Gastrocnemius medialis (tissue), 4 donors: ENCODE measurements at regions of chr7 and their contacts with region 1.

Region 1: DNA sequence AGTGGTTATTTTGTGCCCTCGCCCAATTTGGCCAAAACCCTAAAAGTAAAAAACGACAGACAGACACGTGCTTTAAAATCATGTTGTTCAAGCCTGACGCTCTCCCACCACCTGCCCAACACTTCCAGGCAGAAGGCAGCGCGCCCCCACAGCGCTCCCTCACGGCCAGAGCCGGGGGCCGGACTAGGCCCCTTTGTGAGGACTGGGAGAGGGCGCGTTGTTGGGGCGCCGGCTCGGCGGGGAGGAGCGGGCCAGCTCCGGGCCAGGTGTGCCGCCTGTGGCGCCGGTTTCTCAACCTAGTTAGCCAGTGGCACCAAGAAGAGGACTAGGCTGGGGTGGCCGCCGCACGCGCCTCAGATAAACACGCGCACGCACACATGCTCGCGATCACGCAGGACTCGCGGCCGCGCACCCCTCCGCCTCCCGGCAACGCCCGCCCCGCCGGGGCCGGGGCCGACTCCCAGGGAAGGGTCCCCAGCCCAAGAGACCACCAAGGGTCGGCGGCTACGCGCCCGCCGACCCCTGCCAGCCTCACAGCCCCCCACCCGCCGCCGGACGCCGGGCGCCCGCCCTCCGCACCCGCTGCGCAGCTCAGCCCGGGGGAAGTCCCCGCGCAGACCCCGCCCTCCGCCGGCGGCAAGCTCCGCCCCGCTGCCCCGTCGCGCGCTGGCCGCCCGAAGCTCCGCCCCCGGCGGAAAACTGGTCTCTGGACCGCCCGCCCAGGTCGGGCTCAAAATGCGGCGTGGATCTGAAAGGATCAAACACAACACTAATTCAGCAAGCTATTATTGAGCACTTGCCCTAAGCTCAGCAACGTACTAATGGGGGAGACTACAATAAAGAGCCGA is at the start of gene IMMP2L:
- DNase-seq: peak; percentile 73 to 81
- ATAC-seq: peak; percentile 92 to 95
- H3K4me3 ChIP-seq: peak within 1 kb of the TSS; percentile 76 to 84 (median 78)
- H3K27ac ChIP-seq: peak within 1 kb of the TSS; percentile 84 to 92 (median 91)
- H3K4me1 ChIP-seq: peaks cover 14 to 29% of the 10 kb centered on the region in 2 donors
- H3K27me3 ChIP-seq: no peaks in the 10 kb centered on the region
- CTCF ChIP-seq: peak in 3 of 5 experiments; percentile 16 to 58 (median 35)
- POLR2A ChIP-seq: peak; percentile 93 to 97
- total RNA-seq, gene IMMP2L: 8.3 to 19.2 (median 17.8) TPM

Region 2: DNA sequence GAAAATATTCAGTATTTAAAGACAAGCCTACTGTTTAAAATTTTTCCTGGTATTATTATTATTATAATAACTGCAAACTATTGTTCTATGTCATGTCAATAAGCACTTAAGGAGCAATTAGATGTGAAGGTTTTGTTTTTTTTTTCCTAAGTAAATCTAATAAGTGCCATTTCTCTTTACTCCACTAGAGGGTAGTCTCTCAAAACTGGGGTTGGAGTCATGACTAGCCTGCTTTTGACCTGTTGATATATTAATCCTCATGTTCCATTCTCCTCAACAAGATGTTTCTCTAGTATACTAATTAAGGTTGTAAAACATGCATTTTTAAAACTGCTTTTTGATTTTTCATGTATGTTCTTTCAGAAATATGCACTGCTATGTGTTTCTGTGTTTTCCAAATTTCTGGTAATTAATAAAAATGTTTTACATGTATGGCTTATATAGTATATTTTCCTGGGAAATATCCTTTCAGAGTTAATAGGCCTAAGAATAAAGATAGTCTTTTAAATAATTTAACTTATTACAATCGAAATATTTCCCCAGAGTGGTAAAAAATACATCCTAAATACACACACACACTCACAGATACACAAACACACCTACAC is 472.2 kb before region 1 on chr7:
- in situ Hi-C with region 1: no loop called
- intact Hi-C with region 1: loop called (anchors 5 kb)
- DNase-seq: no peak
- ATAC-seq: peak; percentile 54 to 70
- H3K4me3 ChIP-seq: no peak overlapping the region
- H3K27ac ChIP-seq: no peak overlapping the region
- H3K4me1 ChIP-seq: peaks cover 16 to 37% of the 10 kb centered on the region in 2 donors
- H3K27me3 ChIP-seq: no peaks in the 10 kb centered on the region
- CTCF ChIP-seq: peak; percentile 37 to 81 (median 47)
- POLR2A ChIP-seq: no peak

Region 3: GRCh38 chr7:111527545-111527944 is 34.6 kb before region 1 on chr7:
- in situ Hi-C with region 1: no loop called
- intact Hi-C with region 1: loop called (anchors 5 kb)
- DNase-seq: no peak
- ATAC-seq: peak; percentile 59 to 63
- H3K4me3 ChIP-seq: no peak overlapping the region
- H3K27ac ChIP-seq: no peak overlapping the region
- H3K4me1 ChIP-seq: peaks cover 16 to 20% of the 10 kb centered on the region in 2 donors
- H3K27me3 ChIP-seq: no peaks in the 10 kb centered on the region
- CTCF ChIP-seq: no peak
- POLR2A ChIP-seq: no peak

Region 4: DNA sequence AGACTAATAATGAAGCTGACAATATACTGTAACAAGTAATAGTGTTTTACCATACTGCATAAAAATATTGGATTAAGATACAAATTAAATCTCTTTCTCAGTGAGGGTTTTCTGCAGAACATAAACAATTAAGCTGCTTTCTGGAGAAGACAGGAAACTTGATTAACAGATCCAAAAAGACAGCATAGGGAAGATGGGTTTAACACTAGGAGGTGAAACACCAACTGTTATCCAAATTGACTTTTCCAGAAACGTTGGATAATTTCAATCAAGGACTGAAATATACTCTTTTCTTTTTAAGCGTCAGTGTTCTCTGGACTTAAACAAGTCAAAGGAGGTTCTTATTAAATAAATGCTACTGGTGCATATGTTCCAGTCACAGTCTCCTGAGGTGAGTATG is 45.5 kb after region 1 on chr7:
- in situ Hi-C with region 1: no loop called
- intact Hi-C with region 1: no loop called
- DNase-seq: no peak
- ATAC-seq: no peak
- H3K4me3 ChIP-seq: no peak overlapping the region
- H3K27ac ChIP-seq: no peak overlapping the region
- H3K4me1 ChIP-seq: no peaks in the 10 kb centered on the region
- H3K27me3 ChIP-seq: no peaks in the 10 kb centered on the region
- CTCF ChIP-seq: no peak
- POLR2A ChIP-seq: no peak

Region 5: GRCh38 chr7:111735661-111736551 is 173.8 kb after region 1 on chr7:
- in situ Hi-C with region 1: no loop called
- intact Hi-C with region 1: loop called (anchors 1 kb)
- DNase-seq: peak; percentile 49 to 50
- ATAC-seq: peak; percentile 92
- H3K4me3 ChIP-seq: no peak overlapping the region
- H3K27ac ChIP-seq: peak overlapping the region; percentile 30 to 38 (median 35)
- H3K4me1 ChIP-seq: peaks cover 6 to 14% of the 10 kb centered on the region in 2 donors
- H3K27me3 ChIP-seq: no peaks in the 10 kb centered on the region
- CTCF ChIP-seq: peak; percentile 57 to 91 (median 79)
- POLR2A ChIP-seq: no peak

Region 6: GRCh38 chr7:112129655-112130323 is 567.7 kb after region 1 on chr7:
- in situ Hi-C with region 1: no loop called
- intact Hi-C with region 1: loop called (anchors 10 kb)
- DNase-seq: peak; percentile 40 to 78
- ATAC-seq: peak; percentile 84 to 96
- H3K4me3 ChIP-seq: no peak overlapping the region
- H3K27ac ChIP-seq: peak overlapping the region; percentile 43 to 78 (median 66)
- H3K4me1 ChIP-seq: peaks cover 48 to 55% of the 10 kb centered on the region in 2 donors
- H3K27me3 ChIP-seq: no peaks in the 10 kb centered on the region
- CTCF ChIP-seq: no peak
- POLR2A ChIP-seq: no peak

Region 7: GRCh38 chr7:112495810-112496462 is 933.8 kb after region 1 on chr7:
- in situ Hi-C with region 1: loop called in 1 of 4 experiments (anchors 25 kb)
- intact Hi-C with region 1: no loop called
- DNase-seq: peak; percentile 24 to 60
- ATAC-seq: peak; percentile 86 to 94
- H3K4me3 ChIP-seq: no peak overlapping the region
- H3K27ac ChIP-seq: no peak overlapping the region
- H3K4me1 ChIP-seq: peaks cover 0 to 4% of the 10 kb centered on the region in 2 donors
- H3K27me3 ChIP-seq: no peaks in the 10 kb centered on the region
- CTCF ChIP-seq: peak; percentile 60 to 79 (median 66)
- POLR2A ChIP-seq: no peak